G401 (cell line): ENCODE measurements at regions of chr12 and their contacts with region 1.

Region 1: GRCh38 chr12:53213348-53213747 is 6.3 kb upstream of the ITGB7 start:
- DNase-seq: peak; percentile 84

Region 2: DNA sequence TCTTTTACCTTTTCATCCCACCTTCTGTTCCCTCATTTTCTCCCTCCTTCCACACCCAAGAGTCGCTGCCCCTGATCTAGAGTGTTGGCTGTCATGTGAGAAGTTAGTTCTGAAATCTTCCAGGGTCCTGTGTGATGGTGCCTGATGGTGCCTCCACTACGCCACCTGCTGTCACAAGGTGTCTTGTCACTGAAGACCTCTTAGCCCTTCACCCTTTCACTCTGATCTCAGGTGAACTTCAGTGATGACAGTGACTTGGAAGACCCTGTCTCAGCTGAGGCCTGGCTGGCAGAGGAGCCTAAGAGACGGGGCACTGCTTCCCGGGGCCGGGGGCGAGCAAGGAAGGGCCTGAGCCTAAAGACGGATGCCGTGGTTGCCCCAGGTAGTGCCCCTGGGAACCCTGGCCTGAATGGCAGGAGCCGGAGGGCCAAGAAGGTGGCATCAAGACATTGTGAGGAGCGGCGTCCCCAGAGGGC is 74.4 kb after region 1 on chr12:
- in situ Hi-C with region 1: loop called (anchors 10 kb)
- DNase-seq: peak; percentile 68